HEK293 (cell line): ENCODE measurements at regions of chr12 and their contacts with region 1.

Region 1: DNA sequence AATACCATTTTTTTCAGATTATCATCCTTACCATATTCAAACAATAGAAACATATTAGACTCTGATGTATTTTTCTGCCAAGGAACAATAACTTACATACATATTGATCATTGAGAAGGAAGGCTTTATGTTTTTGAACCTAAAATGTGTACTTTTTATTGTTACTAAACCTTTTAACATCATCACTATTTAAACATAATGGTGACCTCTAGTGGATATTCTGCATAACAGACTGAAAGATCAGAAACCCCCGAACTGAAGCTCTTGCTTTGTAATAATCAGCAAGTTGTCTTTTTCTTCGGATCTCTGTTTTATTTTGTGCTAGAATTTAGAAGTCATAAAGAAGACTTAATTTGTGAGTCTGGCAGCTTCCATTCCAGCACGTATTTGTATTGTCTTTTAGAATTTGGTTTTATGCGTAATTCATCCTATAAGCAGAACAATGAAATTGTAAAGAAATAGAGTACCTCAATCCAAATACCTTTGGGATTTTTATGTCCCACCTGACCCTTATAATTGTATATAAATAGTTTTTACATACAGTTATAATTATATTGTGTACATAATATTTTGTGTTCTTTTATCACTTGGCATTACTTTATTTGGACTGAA is 125.9 kb upstream of the ATF1 start:
- H3K4me3 ChIP-seq: no peak overlapping the region
- H3K27ac ChIP-seq: no peak overlapping the region
- H3K4me1 ChIP-seq: no peaks in the 10 kb centered on the region; the same call in 1 of the 2 replicates
- CTCF ChIP-seq: peak; percentile 21; the same call in 1 of the 2 replicates

Region 2: DNA sequence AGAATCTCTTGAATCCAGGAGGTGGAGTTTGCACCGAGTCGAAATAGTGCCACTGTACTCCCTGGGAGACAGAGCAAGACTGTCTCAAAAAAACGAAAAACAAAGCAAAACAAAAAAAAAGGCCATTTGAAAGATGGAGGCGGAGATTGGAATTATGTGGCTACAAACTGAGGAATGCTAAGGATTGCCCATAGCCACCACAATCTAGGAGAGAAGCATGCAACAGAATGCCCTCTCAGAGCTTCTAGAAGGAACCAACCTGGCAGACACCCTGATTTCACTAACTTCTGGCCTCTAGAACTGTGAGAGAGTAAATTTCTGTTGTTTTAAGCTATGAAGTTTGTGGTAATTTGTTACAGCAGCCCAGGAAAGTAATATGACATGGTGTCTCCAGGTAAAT is 304.5 kb before region 1 on chr12:
- CTCF ChIA-PET with region 1: no interaction called
- POLR2A ChIA-PET with region 1: no interaction called
- H3K4me3 ChIP-seq: no peak overlapping the region
- H3K27ac ChIP-seq: no peak overlapping the region
- H3K4me1 ChIP-seq: no peaks in the 10 kb centered on the region
- CTCF ChIP-seq: no peak

Region 3: GRCh38 chr12:50442178-50442908 is 195.6 kb before region 1 on chr12:
- CTCF ChIA-PET with region 1: no interaction called
- POLR2A ChIA-PET with region 1: no interaction called
- H3K4me3 ChIP-seq: no peak overlapping the region
- H3K27ac ChIP-seq: no peak overlapping the region
- H3K4me1 ChIP-seq: no peaks in the 10 kb centered on the region
- CTCF ChIP-seq: no peak

Region 4: DNA sequence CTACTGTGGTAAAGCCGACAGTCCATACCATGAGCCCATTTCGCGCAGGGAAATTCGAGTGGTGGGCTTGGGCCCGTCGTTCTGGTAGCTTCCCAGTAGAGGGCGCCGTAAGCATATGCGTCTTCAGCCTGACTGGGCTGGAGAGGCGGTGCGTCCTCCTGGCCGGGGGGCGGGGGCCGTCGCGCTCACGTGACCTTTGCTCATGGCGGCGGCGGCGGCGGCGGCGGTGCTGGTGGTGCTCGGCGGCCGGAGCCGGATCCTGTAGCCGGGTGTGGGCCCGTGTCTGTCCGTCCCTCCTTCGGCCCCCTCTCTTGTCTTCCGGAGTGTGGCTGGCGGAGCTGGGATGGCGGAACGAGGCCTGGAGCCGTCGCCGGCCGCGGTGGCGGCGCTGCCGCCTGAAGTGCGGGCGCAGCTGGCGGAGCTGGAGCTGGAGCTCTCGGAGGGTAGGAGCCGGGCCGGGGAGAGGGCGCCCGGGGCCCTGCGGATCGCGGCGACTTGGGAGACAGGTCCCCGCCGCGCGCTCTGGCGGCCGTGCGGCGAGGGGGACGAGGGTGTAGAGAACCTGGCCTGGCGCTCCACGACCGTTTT is 133.1 kb before region 1 on chr12 and contains the start of gene DIP2B:
- CTCF ChIA-PET with region 1: interaction called, 45 read pairs
- POLR2A ChIA-PET with region 1: interaction called, 8 read pairs
- H3K4me3 ChIP-seq: peak within 1 kb of the TSS; percentile 95
- H3K27ac ChIP-seq: peak within 1 kb of the TSS; percentile 77
- H3K4me1 ChIP-seq: peaks cover 12% of the 10 kb centered on the region; the same call in 1 of the 2 replicates
- CTCF ChIP-seq: peak; percentile 84

Region 5: DNA sequence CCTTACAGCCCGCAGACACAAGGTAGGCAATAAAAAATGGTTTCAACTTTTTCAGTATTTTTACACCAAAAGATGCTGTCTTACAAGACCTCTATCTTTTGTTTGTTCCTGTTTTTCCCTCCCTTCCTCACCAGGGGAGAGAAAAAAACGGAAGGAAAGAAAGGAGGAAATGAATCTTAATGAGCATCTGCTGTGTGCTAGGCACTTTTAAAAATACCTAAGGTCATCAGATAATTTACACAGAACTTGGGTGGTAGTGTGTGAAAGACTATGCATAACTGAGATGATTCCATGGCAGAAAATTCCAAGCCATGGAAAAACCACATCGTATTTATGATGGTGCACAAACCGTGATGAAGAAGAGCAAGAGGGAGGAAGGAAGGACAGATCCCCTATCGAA is 11.9 kb before region 1 on chr12:
- CTCF ChIA-PET with region 1: interaction called, 12 read pairs
- POLR2A ChIA-PET with region 1: no interaction called
- H3K4me3 ChIP-seq: no peak overlapping the region
- H3K27ac ChIP-seq: no peak overlapping the region
- H3K4me1 ChIP-seq: peaks cover 8% of the 10 kb centered on the region
- CTCF ChIP-seq: no peak

Region 6: GRCh38 chr12:50708631-50709030 is 70.7 kb after region 1 on chr12:
- CTCF ChIA-PET with region 1: no interaction called
- POLR2A ChIA-PET with region 1: no interaction called
- H3K4me3 ChIP-seq: no peak overlapping the region
- H3K27ac ChIP-seq: no peak overlapping the region
- H3K4me1 ChIP-seq: no peaks in the 10 kb centered on the region
- CTCF ChIP-seq: no peak